Endothelial cell of umbilical vein (primary cell): ENCODE measurements at regions of chr1 and their contacts with region 1.

Region 1: GRCh38 chr1:219304227-219305226 is 130.8 kb downstream of the LYPLAL1 start:
- DNase-seq: peak; percentile 86
- H3K4me3 ChIP-seq: no peak overlapping the region
- H3K27ac ChIP-seq: peak overlapping the region; percentile 94
- H3K4me1 ChIP-seq: peaks cover 35% of the 10 kb centered on the region
- H3K27me3 ChIP-seq: no peaks in the 10 kb centered on the region
- CTCF ChIP-seq: peak in 1 of 2 donors; percentile 4
- POLR2A ChIP-seq: no peak

Region 2: DNA sequence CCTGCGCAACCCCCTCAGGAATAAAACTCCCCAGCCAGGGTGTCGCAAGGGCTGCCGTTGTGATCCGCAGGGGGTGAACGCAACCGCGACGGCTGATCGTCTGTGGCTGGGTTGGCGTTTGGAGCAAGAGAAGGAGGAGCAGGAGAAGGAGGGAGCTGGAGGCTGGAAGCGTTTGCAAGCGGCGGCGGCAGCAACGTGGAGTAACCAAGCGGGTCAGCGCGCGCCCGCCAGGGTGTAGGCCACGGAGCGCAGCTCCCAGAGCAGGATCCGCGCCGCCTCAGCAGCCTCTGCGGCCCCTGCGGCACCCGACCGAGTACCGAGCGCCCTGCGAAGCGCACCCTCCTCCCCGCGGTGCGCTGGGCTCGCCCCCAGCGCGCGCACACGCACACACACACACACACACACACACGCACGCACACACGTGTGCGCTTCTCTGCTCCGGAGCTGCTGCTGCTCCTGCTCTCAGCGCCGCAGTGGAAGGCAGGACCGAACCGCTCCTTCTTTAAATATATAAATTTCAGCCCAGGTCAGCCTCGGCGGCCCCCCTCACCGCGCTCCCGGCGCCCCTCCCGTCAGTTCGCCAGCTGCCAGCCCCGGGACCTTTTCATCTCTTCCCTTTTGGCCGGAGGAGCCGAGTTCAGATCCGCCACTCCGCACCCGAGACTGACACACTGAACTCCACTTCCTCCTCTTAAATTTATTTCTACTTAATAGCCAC is 958.7 kb before region 1 on chr1:
- CTCF ChIA-PET with region 1: no interaction called
- POLR2A ChIA-PET with region 1: no interaction called
- dilution Hi-C with region 1: no loop called
- intact Hi-C with region 1: loop called (anchors 2 kb)
- DNase-seq: peak; percentile 74
- H3K4me3 ChIP-seq: peak overlapping the region; percentile 86 to 95 (median 88)
- H3K27ac ChIP-seq: peak overlapping the region; percentile 85
- H3K4me1 ChIP-seq: peaks cover 32% of the 10 kb centered on the region
- H3K27me3 ChIP-seq: no peaks in the 10 kb centered on the region
- CTCF ChIP-seq: no peak
- POLR2A ChIP-seq: peak; percentile 75

Region 3: GRCh38 chr1:218499011-218499691 is 805.4 kb before region 1 on chr1:
- CTCF ChIA-PET with region 1: no interaction called
- POLR2A ChIA-PET with region 1: no interaction called
- dilution Hi-C with region 1: no loop called
- intact Hi-C with region 1: loop called (anchors 5 kb)
- DNase-seq: peak; percentile 83
- H3K4me3 ChIP-seq: peak overlapping the region in 1 of 3 experiments; percentile 60
- H3K27ac ChIP-seq: peak overlapping the region; percentile 93
- H3K4me1 ChIP-seq: peaks cover 29% of the 10 kb centered on the region
- H3K27me3 ChIP-seq: no peaks in the 10 kb centered on the region
- CTCF ChIP-seq: no peak
- POLR2A ChIP-seq: no peak

Region 4: GRCh38 chr1:219209578-219209977 is 94.9 kb before region 1 on chr1:
- CTCF ChIA-PET with region 1: no interaction called
- POLR2A ChIA-PET with region 1: no interaction called
- dilution Hi-C with region 1: no loop called
- intact Hi-C with region 1: loop called (anchors 1 kb)
- DNase-seq: no peak
- H3K4me3 ChIP-seq: no peak overlapping the region
- H3K27ac ChIP-seq: no peak overlapping the region
- H3K4me1 ChIP-seq: no peaks in the 10 kb centered on the region
- H3K27me3 ChIP-seq: no peaks in the 10 kb centered on the region
- CTCF ChIP-seq: no peak
- POLR2A ChIP-seq: no peak

Region 5: GRCh38 chr1:219317762-219318353 is 13.3 kb after region 1 on chr1:
- CTCF ChIA-PET with region 1: no interaction called
- POLR2A ChIA-PET with region 1: no interaction called
- dilution Hi-C with region 1: no loop called
- intact Hi-C with region 1: loop called (anchors 1 kb)
- DNase-seq: peak; percentile 44
- H3K4me3 ChIP-seq: no peak overlapping the region
- H3K27ac ChIP-seq: no peak overlapping the region
- H3K4me1 ChIP-seq: peaks cover 7% of the 10 kb centered on the region
- H3K27me3 ChIP-seq: no peaks in the 10 kb centered on the region
- CTCF ChIP-seq: peak in 1 of 2 donors; percentile 18
- POLR2A ChIP-seq: no peak

Region 6: GRCh38 chr1:219362702-219363101 is 58.2 kb after region 1 on chr1:
- CTCF ChIA-PET with region 1: no interaction called
- POLR2A ChIA-PET with region 1: no interaction called
- dilution Hi-C with region 1: no loop called
- intact Hi-C with region 1: loop called (anchors 1 kb)
- DNase-seq: peak; percentile 64
- H3K4me3 ChIP-seq: no peak overlapping the region
- H3K27ac ChIP-seq: peak overlapping the region; percentile 34
- H3K4me1 ChIP-seq: peaks cover 17% of the 10 kb centered on the region
- H3K27me3 ChIP-seq: no peaks in the 10 kb centered on the region
- CTCF ChIP-seq: no peak
- POLR2A ChIP-seq: no peak

Region 7: DNA sequence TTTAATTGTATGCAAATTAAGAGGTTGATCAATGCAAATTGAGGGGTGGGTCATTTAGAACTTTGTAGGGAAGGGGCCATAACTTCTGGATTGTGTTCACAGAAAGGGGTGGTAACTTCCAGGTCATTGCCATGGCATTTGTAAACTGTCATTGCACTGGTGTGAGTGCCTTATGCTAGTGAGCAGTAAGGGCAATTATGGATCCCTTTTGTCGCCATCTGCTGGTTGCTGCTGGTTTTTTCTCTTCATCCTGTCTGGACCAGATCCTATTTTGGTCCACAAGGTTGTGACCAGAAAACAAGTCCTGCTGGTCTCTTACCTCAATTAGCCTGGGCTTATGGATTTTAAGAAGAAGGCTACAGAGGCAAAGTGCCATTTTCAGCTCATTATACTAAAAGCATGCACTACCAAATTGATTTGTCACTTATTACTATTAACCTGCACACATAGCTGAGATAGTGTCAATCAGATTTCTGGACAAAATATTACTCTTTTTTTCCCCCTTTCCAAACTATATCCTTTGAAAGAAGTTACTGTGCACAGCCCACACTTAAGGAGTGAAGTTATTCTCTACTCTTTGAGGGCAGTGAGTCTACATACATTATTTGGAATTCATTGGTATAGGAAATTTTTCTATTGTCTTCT is 112.2 kb after region 1 on chr1:
- CTCF ChIA-PET with region 1: no interaction called
- POLR2A ChIA-PET with region 1: no interaction called
- dilution Hi-C with region 1: no loop called
- intact Hi-C with region 1: loop called (anchors 1 kb)
- DNase-seq: peak; percentile 71
- H3K4me3 ChIP-seq: no peak overlapping the region
- H3K27ac ChIP-seq: no peak overlapping the region
- H3K4me1 ChIP-seq: no peaks in the 10 kb centered on the region
- H3K27me3 ChIP-seq: no peaks in the 10 kb centered on the region
- CTCF ChIP-seq: peak; percentile 62 to 75
- POLR2A ChIP-seq: no peak

Region 8: DNA sequence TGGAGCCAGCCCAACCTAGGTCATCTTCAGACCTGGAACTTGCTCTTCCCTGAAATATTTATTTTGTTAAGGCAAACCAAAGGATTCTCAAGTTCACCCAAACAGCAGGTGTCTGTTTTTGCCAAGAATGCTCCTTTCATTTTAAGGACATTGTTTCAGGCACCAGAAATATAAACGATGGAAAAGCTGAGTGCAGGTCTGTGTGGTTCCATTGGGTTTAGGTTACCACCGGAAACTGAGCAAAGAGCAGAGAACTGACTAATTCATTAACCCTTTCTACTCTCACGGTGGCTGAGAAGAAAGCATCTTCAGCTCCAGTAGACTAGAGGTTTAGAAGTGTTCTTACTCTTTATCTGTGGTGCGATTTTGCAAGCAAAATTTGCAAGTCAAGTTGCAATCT is 346.4 kb after region 1 on chr1:
- CTCF ChIA-PET with region 1: no interaction called
- POLR2A ChIA-PET with region 1: no interaction called
- dilution Hi-C with region 1: no loop called
- intact Hi-C with region 1: no loop called
- DNase-seq: no peak
- H3K4me3 ChIP-seq: no peak overlapping the region
- H3K27ac ChIP-seq: no peak overlapping the region
- H3K4me1 ChIP-seq: no peaks in the 10 kb centered on the region
- H3K27me3 ChIP-seq: no peaks in the 10 kb centered on the region
- CTCF ChIP-seq: no peak
- POLR2A ChIP-seq: no peak